ENCODE measurements at regions of chr7 and their contacts with region 1.

Region 1: GRCh38 chr7:22565315-22565811 is 65.4 kb upstream of the STEAP1B start:
- DNase-seq: no peak
- ATAC-seq: peak; percentile 65
- H3K4me3 Mint-ChIP-seq: peak overlapping the region; percentile 39
- H3K27ac Mint-ChIP-seq: peak overlapping the region; percentile 88
- H3K4me1 Mint-ChIP-seq: peaks cover 86% of the 10 kb centered on the region
- H3K27me3 Mint-ChIP-seq: no peaks in the 10 kb centered on the region
- CTCF ChIP-seq: no peak

Region 2: DNA sequence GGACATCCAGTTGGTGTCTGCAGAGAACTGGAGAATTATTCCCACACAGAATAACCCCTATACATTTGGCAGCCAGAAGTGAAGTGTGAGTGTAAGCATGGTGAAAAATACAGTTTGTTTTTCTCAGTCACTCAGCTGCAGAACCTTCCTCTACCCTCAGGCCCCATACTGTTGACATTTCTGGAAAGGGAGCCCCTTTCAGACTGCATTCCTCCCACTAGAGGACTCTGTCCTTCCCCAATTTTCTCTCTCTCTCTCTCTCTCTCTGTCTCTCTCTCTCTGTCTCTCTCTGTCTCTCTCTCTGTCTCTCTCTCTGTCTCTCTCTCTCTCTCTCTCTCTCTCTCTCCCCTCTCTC is 21.4 kb after region 1 on chr7:
- CTCF ChIA-PET with region 1: interaction called, 5 read pairs
- POLR2A ChIA-PET with region 1: interaction called, 12 read pairs
- intact Hi-C with region 1: loop called (anchors 1 kb)
- DNase-seq: no peak
- ATAC-seq: no peak
- H3K4me3 Mint-ChIP-seq: peak overlapping the region; percentile 67
- H3K27ac Mint-ChIP-seq: peak overlapping the region; percentile 87
- H3K4me1 Mint-ChIP-seq: peaks cover 65% of the 10 kb centered on the region
- H3K27me3 Mint-ChIP-seq: no peaks in the 10 kb centered on the region
- CTCF ChIP-seq: no peak

Region 3: GRCh38 chr7:22613496-22613895 is 48.1 kb after region 1 on chr7:
- CTCF ChIA-PET with region 1: interaction called, 3 read pairs
- POLR2A ChIA-PET with region 1: interaction called, 7 read pairs
- intact Hi-C with region 1: loop called (anchors 2 kb)
- DNase-seq: no peak
- ATAC-seq: no peak
- H3K4me3 Mint-ChIP-seq: no peak overlapping the region
- H3K27ac Mint-ChIP-seq: no peak overlapping the region
- H3K4me1 Mint-ChIP-seq: peaks cover 43% of the 10 kb centered on the region
- H3K27me3 Mint-ChIP-seq: no peaks in the 10 kb centered on the region
- CTCF ChIP-seq: no peak

Region 4: DNA sequence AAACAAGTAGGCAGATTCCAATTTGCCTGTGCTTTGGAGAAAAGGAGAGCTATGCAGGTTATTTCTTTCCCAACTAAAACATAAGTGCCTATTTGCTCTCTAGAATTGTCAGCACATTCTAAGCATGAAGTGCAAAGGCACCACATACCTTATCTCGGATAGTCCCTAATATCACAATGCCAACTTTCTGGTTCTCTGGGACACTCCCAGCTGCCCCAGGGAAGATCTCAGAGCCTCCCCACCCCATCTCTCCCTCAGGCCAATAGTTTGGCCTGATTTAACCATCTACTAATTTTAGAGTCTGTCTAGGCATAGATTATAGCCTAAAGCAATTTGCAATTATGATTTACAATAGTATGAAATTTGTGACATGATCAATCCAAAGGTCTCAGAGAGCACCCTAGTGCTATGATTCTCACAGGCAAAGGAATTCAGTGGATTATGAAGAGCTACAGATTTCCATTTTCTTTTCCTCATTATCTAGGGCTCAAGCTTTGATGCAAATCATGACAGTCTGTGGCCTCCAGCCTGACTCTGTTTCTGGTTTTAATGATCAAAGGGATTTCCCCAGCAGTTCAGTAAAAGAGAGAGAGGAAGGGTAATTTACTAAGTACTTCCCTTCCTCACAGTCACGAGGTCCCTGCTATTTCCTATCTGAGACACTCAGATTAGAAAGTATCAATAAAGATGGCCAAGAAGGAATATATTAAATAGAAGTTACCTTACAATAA is 132.7 kb after region 1 on chr7:
- CTCF ChIA-PET with region 1: interaction called, 13 read pairs
- POLR2A ChIA-PET with region 1: interaction called, 20 read pairs
- intact Hi-C with region 1: loop called (anchors 1 kb)
- DNase-seq: no peak
- ATAC-seq: peak; percentile 74
- H3K4me3 Mint-ChIP-seq: peak overlapping the region; percentile 61
- H3K27ac Mint-ChIP-seq: peak overlapping the region; percentile 89
- H3K4me1 Mint-ChIP-seq: peaks cover 93% of the 10 kb centered on the region
- H3K27me3 Mint-ChIP-seq: no peaks in the 10 kb centered on the region
- CTCF ChIP-seq: no peak

Region 5: DNA sequence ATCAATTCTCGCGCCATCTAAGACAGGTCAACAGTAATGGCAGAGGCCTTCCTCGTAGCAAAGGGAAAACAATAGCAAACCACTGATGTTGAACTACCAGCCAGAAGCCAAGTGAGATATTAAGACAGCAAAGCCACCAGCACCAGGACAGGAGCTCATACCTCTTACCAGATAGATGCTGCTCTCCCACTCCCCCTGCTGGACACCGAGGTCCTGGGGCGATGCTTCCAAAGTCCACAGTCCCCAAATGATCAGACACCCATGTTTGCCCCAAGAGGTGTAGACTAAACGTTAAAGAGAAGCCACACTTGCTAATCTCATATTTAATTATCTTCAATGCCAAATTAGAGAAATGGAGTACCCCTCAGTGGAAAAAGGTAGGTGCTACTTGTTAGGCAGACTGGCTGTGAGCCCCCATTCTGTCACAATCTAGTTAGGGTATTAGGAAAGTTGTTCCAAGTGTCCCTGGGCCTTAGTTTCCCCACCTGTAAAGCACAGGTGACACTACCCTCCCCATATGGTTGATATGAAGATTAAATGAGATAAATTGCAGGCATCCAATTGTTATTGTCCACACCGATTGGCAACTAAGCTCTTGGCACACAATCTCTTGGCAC is 217.4 kb after region 1 on chr7:
- CTCF ChIA-PET with region 1: interaction called, 94 read pairs
- POLR2A ChIA-PET with region 1: interaction called, 5 read pairs
- intact Hi-C with region 1: loop called (anchors 1 kb)
- DNase-seq: peak; percentile 65
- ATAC-seq: peak; percentile 99
- H3K4me3 Mint-ChIP-seq: no peak overlapping the region
- H3K27ac Mint-ChIP-seq: no peak overlapping the region
- H3K4me1 Mint-ChIP-seq: no peaks in the 10 kb centered on the region
- H3K27me3 Mint-ChIP-seq: no peaks in the 10 kb centered on the region
- CTCF ChIP-seq: no peak